ENCODE measurements at regions of chr17 and their contacts with region 1.

Region 1: DNA sequence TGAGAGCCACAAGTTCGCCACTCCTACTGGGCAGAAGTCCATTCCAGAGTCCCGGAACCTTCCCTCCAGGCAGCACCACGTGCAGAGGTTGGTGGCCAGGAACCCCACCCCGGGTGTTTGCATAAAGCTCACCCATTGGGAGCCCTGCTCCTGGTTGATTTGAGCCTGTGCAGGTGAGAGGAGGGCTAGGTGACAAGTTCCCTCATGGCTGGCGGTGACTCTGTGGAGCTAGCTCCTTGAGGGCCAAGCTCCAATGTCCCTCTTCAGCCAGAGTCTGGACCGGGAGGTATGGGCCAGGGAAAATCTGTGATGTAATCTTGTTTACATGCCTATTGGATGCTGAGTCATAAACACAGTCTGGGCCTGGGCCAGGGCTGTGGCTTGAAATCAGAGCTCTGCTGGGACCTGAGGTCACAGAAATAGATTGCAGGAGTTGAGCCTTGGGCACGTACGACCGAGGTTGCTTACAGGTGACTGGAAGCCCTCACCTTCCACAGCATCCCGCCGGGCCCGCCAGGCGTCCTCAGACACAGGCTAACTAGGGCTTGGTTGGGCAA is 118.9 kb downstream of the AATF start:
- DNase-seq: no peak
- CTCF ChIP-seq: no peak

Region 2: GRCh38 chr17:36629252-36629847 is 438.3 kb before region 1 on chr17:
- in situ Hi-C with region 1: loop called (anchors 25 kb)
- DNase-seq: peak; percentile 91
- CTCF ChIP-seq: peak; percentile 99

Region 3: DNA sequence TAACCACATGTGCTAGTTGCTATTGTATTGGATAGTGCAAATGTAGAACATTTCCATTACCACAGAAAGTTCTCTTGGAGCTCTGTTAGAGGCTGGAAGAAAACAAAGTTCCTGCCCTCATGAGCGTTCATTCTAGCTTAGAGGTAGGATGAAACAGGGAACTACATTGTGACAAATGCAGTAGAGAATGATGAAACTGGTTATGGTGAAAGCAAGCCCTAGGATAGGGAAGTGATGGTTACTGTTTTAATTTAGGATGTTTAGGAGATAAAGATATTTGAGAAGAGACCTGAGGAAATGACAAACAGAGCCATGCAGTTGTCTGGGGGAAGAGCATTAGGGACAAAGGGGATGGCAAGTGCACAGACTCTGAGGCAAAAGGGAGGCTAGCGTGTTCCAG is 68.2 kb before region 1 on chr17:
- in situ Hi-C with region 1: no loop called
- DNase-seq: no peak
- CTCF ChIP-seq: no peak